Naive thymus-derived CD4-positive, alpha-beta T cell (primary cell): ENCODE measurements at regions of chr10 and their contacts with region 1.

Region 1: DNA sequence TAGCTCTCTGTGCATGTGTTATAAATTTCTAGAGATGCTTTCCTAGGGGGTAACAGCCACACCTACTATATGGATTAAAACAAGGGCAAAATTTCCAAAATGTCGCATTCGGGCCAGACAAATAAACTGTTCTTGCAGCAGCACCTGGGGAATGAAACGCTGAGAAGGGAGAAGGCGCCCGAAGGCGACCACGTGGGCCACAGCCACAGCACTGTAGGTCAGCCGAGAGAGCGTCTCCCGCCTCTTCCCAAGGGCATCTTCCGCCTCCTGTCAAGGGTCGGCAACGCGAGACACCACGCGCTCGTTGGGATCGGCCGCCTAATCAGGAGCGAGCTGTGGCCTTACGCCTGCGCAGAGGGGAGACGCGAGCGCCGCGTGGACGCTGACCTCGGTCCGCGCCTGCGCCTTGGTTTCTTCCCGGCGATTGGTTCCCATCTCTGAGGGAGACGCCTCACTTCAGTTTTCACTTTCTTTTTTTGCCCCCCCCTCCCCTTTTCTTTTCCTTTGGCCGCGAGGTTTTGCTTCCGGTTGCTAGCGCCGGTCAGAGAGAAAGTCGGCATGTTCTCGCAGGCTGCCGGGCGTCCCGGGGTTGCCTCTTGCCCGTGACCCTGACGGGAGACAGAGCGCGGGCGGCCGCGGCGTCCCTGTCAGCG is at the start of gene TASOR2:
- DNase-seq: peak; percentile 91 to 96 (median 93)
- ATAC-seq: peak; percentile 92
- H3K4me3 ChIP-seq: peak within 1 kb of the TSS; percentile 76
- H3K4me3 Mint-ChIP-seq: peak within 1 kb of the TSS; percentile 93 to 100 (median 98)
- H3K27ac ChIP-seq: peak within 1 kb of the TSS; percentile 96
- H3K27ac Mint-ChIP-seq: peak within 1 kb of the TSS; percentile 90 to 99 (median 98)
- H3K4me1 ChIP-seq: peaks cover 15 to 24% of the 10 kb centered on the region in 2 donors
- H3K4me1 Mint-ChIP-seq: peaks cover 31 to 55% (median 44%) of the 10 kb centered on the region in 7 donors
- H3K27me3 ChIP-seq: no peaks in the 10 kb centered on the region
- H3K27me3 Mint-ChIP-seq: peaks cover 0 to 12% (median under 1%) of the 10 kb centered on the region in 5 donors
- total RNA-seq, gene TASOR2: 55.0 to 86.5 (median 62.1) TPM

Region 2: DNA sequence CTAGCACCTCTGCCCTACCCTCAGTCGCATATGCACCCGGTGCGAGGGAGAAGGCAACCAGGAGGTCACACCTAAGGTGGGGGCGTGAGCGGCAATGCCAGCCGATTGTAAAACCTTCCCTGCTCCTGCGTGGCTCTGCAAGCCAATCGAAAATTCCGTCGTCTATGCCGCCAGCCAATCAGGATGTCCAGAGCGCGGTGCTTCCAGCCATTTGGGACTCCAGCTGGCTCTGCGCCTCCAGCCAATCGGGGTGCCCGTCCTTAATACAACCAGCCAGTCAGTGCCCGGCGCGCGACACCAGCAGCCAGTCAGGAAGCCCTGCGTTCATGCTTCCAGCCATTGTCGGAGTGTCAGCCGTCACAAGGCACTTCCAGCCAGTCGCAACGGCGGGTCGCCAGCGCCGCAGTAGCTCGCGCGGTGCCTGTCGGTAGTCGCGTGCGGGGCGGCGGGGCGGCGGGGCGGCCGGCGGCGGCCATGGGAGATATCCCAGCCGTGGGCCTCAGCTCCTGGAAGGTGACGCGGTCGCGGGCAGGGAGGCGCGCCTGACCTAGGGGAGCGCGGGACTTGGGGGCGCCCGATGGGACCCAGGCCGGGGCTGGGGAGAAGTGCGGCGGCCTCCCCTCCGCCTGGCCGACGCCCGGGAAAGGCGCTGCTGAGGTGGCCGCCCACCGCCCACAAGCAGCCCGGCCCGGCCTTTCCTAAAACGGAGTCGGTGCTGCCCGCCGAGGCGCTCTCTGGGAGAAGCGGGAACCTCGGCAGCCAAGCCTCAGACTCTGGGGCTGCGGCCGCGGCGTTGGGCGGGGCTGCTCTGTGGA is 858.4 kb before region 1 on chr10 and contains the start of gene AKR1E2:
- CTCF ChIA-PET with region 1: no interaction called
- POLR2A ChIA-PET with region 1: no interaction called
- intact Hi-C with region 1: loop called in 1 of 2 experiments (anchors 10 kb)
- DNase-seq: peak; percentile 56 to 91 (median 83)
- ATAC-seq: peak; percentile 93
- H3K4me3 ChIP-seq: peak within 1 kb of the TSS; percentile 10
- H3K4me3 Mint-ChIP-seq: peak within 1 kb of the TSS; percentile 61 to 89 (median 84)
- H3K27ac ChIP-seq: peak within 1 kb of the TSS; percentile 72
- H3K27ac Mint-ChIP-seq: peak within 1 kb of the TSS; percentile 12 to 94 (median 85)
- H3K4me1 ChIP-seq: peaks cover 2 to 6% of the 10 kb centered on the region in 2 donors
- H3K4me1 Mint-ChIP-seq: peaks cover 9 to 43% (median 29%) of the 10 kb centered on the region in 7 donors
- H3K27me3 ChIP-seq: peaks cover 0 to 3% of the 10 kb centered on the region in 2 donors
- H3K27me3 Mint-ChIP-seq: peaks cover 0 to 56% (median 31%) of the 10 kb centered on the region in 5 donors
- total RNA-seq, gene AKR1E2: 8.6 to 26.0 (median 25.1) TPM

Region 3: GRCh38 chr10:5629303-5630111 is 54.9 kb before region 1 on chr10:
- CTCF ChIA-PET with region 1: no interaction called
- POLR2A ChIA-PET with region 1: no interaction called
- intact Hi-C with region 1: loop called (anchors 1 to 5 kb)
- DNase-seq: peak; percentile 63 to 89 (median 82)
- ATAC-seq: peak; percentile 99
- H3K4me3 ChIP-seq: no peak overlapping the region
- H3K4me3 Mint-ChIP-seq: peak overlapping the region in 9 of 10 donors; percentile 28 to 63 (median 53)
- H3K27ac ChIP-seq: no peak overlapping the region
- H3K27ac Mint-ChIP-seq: peak overlapping the region in 3 of 9 donors; percentile 38 to 82 (median 53)
- H3K4me1 ChIP-seq: peaks cover 3 to 10% of the 10 kb centered on the region in 2 donors
- H3K4me1 Mint-ChIP-seq: peaks cover 5 to 22% (median 16%) of the 10 kb centered on the region in 7 donors
- H3K27me3 ChIP-seq: peaks cover 0 to 4% of the 10 kb centered on the region in 2 donors
- H3K27me3 Mint-ChIP-seq: peaks cover 0 to 11% (median 4%) of the 10 kb centered on the region in 5 donors

Region 4: GRCh38 chr10:5732141-5732540 is 47.7 kb after region 1 on chr10:
- CTCF ChIA-PET with region 1: interaction called, 3 read pairs
- POLR2A ChIA-PET with region 1: no interaction called
- intact Hi-C with region 1: loop called in 1 of 2 experiments (anchors 5 kb)
- DNase-seq: no peak
- ATAC-seq: no peak
- H3K4me3 ChIP-seq: no peak overlapping the region
- H3K4me3 Mint-ChIP-seq: no peak overlapping the region
- H3K27ac ChIP-seq: no peak overlapping the region
- H3K27ac Mint-ChIP-seq: peak overlapping the region in 5 of 9 donors; percentile 6 to 48 (median 12)
- H3K4me1 ChIP-seq: no peaks in the 10 kb centered on the region
- H3K4me1 Mint-ChIP-seq: peaks cover 8 to 35% (median 23%) of the 10 kb centered on the region in 7 donors
- H3K27me3 ChIP-seq: no peaks in the 10 kb centered on the region
- H3K27me3 Mint-ChIP-seq: no peaks in the 10 kb centered on the region

Region 5: GRCh38 chr10:5813287-5814109 is 129.1 kb after region 1 on chr10 and contains the start of gene GDI2:
- CTCF ChIA-PET with region 1: no interaction called
- POLR2A ChIA-PET with region 1: interaction called, 3 read pairs
- intact Hi-C with region 1: loop called (anchors 1 kb)
- DNase-seq: peak; percentile 94 to 98 (median 97)
- ATAC-seq: peak; percentile 98
- H3K4me3 ChIP-seq: peak within 1 kb of the TSS; percentile 86
- H3K4me3 Mint-ChIP-seq: peak within 1 kb of the TSS; percentile 85 to 95 (median 93)
- H3K27ac ChIP-seq: peak within 1 kb of the TSS; percentile 99
- H3K27ac Mint-ChIP-seq: peak within 1 kb of the TSS; percentile 85 to 98 (median 95)
- H3K4me1 ChIP-seq: peaks cover 27 to 37% of the 10 kb centered on the region in 2 donors
- H3K4me1 Mint-ChIP-seq: peaks cover 49 to 71% (median 67%) of the 10 kb centered on the region in 7 donors
- H3K27me3 ChIP-seq: no peaks in the 10 kb centered on the region
- H3K27me3 Mint-ChIP-seq: no peaks in the 10 kb centered on the region
- total RNA-seq, gene GDI2: 85.3 to 236 (median 121) TPM

Region 6: DNA sequence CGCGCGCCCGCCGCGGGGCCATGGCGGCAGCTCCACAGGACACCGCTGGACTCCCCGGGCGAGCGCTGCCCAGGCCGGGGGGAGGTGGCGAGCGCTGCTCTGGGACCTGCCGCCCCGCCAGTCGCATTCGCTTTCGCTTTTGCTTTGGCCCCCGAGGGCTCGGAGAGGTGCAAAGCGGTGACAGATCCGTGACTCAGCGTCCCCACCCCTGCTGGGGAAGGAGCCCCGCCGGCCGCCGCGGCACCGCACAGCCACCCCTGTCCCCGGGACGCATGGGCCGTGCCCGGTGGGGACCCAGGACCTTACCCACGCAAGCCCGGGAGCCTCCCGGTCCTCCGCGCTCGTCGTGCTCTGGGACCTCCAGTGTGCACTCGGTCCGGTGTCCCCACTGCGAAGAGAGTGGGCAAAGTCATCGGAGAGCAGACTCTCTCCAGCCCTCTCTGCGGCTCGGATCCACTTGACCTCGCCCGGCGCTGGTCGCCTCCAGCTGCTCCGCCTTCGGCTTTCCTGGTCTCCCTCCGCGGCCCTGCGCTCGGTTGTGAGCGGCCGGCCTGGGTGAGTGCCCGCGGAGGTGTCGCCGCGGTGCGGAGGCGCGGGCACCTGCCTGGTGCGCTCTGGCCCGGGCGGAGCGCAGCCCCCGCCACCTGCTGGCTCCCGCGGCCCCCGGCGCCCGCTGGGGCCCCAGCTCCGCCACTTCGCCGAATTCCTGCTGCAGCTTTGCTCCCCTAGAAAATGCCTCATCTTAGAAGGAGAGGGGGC is 293.2 kb after region 1 on chr10 and contains the start of gene IL15RA:
- CTCF ChIA-PET with region 1: no interaction called
- POLR2A ChIA-PET with region 1: no interaction called
- intact Hi-C with region 1: loop called (anchors 1 kb)
- DNase-seq: peak; percentile 60 to 89 (median 71)
- ATAC-seq: peak; percentile 84
- H3K4me3 ChIP-seq: peak within 1 kb of the TSS; percentile 97
- H3K4me3 Mint-ChIP-seq: peak within 1 kb of the TSS; percentile 89 to 98 (median 96)
- H3K27ac ChIP-seq: peak within 1 kb of the TSS; percentile 74
- H3K27ac Mint-ChIP-seq: peak within 1 kb of the TSS; percentile 85 to 97 (median 89)
- H3K4me1 ChIP-seq: peaks cover 0 to 6% of the 10 kb centered on the region in 2 donors
- H3K4me1 Mint-ChIP-seq: peaks cover 12 to 36% (median 21%) of the 10 kb centered on the region in 7 donors
- H3K27me3 ChIP-seq: no peaks in the 10 kb centered on the region
- H3K27me3 Mint-ChIP-seq: peaks cover 0 to 21% (median 0%) of the 10 kb centered on the region in 5 donors
- total RNA-seq, gene IL15RA: 3.5 to 24.9 (median 5.6) TPM